Cardiac septum (tissue), 1 donor: ENCODE measurements at regions of chr1 and their contacts with region 1.

Region 1: GRCh38 chr1:165898837-165899236 is 71.4 kb downstream of the UCK2 start:
- DNase-seq: no peak

Region 2: DNA sequence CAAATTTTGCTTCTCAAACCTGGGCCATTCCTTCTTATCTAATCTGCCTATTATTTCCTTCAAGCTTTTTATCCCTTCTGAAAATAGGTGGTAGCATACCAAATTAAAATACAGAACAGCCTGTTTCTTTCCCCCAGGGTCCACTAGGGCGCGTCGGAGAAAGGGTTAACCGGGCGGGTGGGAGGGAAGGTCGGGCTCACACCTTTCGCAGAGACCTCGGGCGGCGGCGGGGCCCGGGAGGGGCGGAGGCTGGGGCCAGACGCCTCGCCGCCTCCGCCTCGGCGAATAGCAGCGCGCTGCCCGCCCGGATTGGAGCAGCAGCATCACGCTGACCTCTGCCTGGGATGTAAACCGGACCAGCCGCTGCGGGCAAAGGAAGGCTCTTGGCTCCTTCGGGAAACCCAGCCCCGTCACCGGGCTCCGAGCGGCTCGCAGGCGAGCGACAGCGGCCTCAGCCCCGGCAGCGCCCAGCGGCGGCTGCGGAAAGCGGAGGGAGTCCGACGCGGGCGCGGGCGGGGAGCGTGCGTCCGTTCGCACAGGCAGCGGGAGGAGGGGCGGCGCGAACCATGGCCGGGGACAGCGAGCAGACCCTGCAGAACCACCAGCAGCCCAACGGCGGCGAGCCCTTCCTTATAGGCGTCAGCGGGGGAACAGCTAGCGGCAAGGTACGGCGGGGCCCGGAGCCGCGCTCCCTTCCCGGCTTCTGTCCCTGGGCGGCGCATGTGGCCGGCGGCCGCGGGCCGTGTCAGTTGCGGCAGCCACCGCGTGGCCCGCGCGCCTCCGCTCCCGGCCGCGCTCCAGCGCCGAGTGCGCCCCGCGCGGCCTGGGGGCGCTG is 71.4 kb before region 1 on chr1 and contains the start of gene UCK2:
- intact Hi-C with region 1: loop called (anchors 2 kb)
- DNase-seq: peak; percentile 91
- total RNA-seq, gene UCK2: 32.0 TPM